Gastrocnemius medialis (tissue), 4 donors: ENCODE measurements at regions of chr11 and their contacts with region 1.

Region 1: DNA sequence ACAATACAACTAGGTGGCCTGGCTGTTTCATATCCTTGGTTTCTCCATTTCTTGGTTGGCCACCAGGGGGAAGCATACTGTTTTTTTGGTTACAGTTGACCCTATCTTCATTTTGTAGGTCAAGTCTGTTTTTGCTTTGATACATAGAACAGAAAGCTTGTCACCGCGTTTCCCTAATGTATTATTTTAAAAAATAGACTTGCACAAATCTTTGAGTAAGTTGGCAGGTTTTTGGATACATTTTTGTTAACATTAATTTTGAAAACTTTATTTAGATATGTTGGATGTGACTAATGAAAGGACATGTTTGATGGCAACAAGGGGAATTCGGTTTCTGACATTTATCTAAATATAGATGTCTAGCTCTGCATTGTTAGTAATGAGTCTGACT is 3.0 kb downstream of the NCR3LG1 start:
- DNase-seq: peak; percentile 32 to 54
- ATAC-seq: peak; percentile 62 to 66
- H3K4me3 ChIP-seq: no peak overlapping the region
- H3K27ac ChIP-seq: no peak overlapping the region
- H3K4me1 ChIP-seq: peaks cover 17 to 24% of the 10 kb centered on the region in 2 donors
- H3K27me3 ChIP-seq: peaks cover 16 to 27% (median 25%) of the 10 kb centered on the region in 3 donors
- CTCF ChIP-seq: peak; percentile 41 to 72 (median 56)
- POLR2A ChIP-seq: no peak

Region 2: GRCh38 chr11:17207317-17208258 is 147.0 kb before region 1 on chr11 and contains the start of gene PIK3C2A:
- in situ Hi-C with region 1: no loop called
- intact Hi-C with region 1: loop called (anchors 10 kb)
- DNase-seq: peak; percentile 95 to 96
- ATAC-seq: peak; percentile 93 to 96
- H3K4me3 ChIP-seq: peak within 1 kb of the TSS; percentile 89 to 97 (median 92)
- H3K27ac ChIP-seq: peak within 1 kb of the TSS; percentile 90 to 98 (median 96)
- H3K4me1 ChIP-seq: peaks cover 18 to 26% of the 10 kb centered on the region in 2 donors
- H3K27me3 ChIP-seq: no peaks in the 10 kb centered on the region
- CTCF ChIP-seq: no peak
- POLR2A ChIP-seq: peak; percentile 91 to 94
- total RNA-seq, gene PIK3C2A: 8.8 to 21.0 (median 14.8) TPM

Region 3: DNA sequence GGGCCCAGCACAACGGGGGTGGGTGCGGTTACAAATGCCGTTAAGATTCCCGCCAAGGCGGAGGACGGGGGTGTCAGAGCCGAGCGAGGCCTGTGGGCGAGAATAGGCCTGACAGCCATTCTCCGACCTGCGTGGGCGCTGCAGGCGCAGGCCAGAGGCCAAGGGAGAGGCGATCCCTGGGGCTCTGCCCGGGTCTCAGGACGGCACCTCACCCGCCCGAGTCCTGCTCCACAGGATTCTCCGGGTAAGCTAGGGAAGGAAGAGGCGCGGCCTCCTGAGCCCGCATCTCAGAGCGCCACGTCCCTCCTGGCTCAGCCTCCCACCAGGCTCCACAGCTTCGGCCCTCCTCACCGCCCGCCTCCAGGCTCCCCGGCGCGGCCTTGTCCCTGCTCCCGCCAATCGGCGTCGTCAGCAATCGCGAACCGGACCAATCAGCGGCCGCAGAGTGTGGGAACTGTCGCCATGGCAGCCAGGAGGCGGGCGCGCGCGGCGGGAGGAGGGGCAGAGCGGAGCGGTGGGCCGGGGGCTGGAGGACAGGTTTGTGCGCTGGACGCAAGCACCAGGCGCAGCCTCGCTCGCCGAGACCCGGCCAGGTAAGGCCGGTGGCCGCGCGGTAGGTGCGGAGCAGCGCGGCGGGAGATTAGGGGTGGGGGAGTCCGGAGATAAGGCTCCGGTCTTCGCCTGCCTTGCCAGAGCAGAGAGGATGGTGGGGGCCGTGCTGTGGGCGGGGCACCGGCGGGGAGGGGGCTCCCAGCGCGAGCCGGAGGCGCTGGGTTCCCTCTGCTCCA is 78.2 kb before region 1 on chr11 and contains the start of gene NUCB2:
- in situ Hi-C with region 1: no loop called
- intact Hi-C with region 1: loop called (anchors 2 kb)
- DNase-seq: peak; percentile 92 to 94
- ATAC-seq: peak; percentile 97
- H3K4me3 ChIP-seq: peak within 1 kb of the TSS; percentile 69 to 96 (median 91)
- H3K27ac ChIP-seq: peak within 1 kb of the TSS; percentile 88 to 93 (median 88)
- H3K4me1 ChIP-seq: peaks cover 11 to 19% of the 10 kb centered on the region in 2 donors
- H3K27me3 ChIP-seq: no peaks in the 10 kb centered on the region
- CTCF ChIP-seq: no peak
- POLR2A ChIP-seq: peak; percentile 42 to 68
- total RNA-seq, gene NUCB2: 15.1 to 59.1 (median 39.1) TPM

Region 4: DNA sequence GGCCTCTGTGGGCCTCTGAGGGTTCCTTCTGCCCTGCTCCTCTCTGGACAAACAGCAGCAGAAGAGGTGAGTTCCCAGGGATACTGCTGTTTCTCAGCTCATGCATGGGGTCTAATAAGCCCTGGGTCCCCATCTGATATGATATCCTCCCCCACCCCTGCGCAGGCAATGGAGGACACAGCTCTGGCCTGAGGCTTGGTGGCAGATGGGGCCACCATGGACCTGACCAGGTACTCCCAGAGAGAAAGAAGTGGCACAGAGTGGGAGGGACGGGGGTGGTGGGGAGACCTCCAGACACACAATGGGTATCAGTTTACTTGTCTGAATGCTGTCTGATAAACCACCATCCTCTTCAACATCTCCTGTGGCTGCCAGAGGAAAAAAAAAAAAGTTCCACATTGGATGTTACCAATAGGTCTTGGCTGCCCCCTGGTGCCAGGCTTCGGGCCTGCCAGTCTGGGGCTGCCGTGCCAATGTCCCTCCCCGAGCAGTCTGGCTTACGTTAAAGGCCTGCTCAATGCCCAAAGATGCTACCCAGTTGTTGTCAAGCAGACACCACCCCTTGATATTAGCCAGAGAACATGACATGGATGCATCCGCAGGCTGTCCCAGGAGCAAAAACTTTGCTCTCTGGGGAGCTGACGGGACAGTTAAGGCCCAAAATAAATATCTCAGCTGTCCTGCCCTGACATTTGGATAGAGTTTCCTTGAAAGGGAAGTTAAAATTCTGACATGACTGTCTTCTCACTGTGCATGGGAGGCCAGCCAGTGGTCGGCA is 149.9 kb after region 1 on chr11:
- in situ Hi-C with region 1: no loop called
- intact Hi-C with region 1: loop called (anchors 1 kb)
- DNase-seq: peak; percentile 59 to 82
- ATAC-seq: peak; percentile 67 to 90
- H3K4me3 ChIP-seq: no peak overlapping the region
- H3K27ac ChIP-seq: peak overlapping the region; percentile 12 to 39 (median 32)
- H3K4me1 ChIP-seq: peaks cover 20 to 24% of the 10 kb centered on the region in 2 donors
- H3K27me3 ChIP-seq: no peaks in the 10 kb centered on the region
- CTCF ChIP-seq: peak; percentile 88 to 98 (median 90)
- POLR2A ChIP-seq: no peak

Region 5: DNA sequence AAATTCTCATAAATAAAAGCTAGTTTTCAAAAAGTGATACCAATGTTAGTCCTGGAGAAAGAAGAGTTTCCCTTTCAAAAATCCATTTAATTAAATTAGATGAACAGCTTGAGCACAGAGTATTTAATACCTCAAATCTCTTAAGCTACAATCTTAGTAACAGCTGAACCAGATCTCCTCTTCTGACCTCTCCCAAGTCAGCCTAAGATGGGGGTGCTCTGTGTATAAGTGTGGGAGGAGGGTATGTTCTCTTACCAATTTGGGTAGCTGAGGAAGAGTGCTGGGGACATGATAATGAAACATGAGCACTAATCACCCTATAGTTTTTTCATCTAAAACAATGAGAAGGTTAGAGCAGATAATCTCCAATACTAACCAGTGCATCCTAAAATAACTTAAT is 681.9 kb after region 1 on chr11:
- in situ Hi-C with region 1: no loop called
- intact Hi-C with region 1: no loop called
- DNase-seq: no peak
- ATAC-seq: no peak
- H3K4me3 ChIP-seq: no peak overlapping the region
- H3K27ac ChIP-seq: no peak overlapping the region
- H3K4me1 ChIP-seq: no peaks in the 10 kb centered on the region
- H3K27me3 ChIP-seq: no peaks in the 10 kb centered on the region
- CTCF ChIP-seq: no peak
- POLR2A ChIP-seq: no peak